Panc1 (cell line): ENCODE measurements at regions of chr19 and their contacts with region 1.

Region 1: DNA sequence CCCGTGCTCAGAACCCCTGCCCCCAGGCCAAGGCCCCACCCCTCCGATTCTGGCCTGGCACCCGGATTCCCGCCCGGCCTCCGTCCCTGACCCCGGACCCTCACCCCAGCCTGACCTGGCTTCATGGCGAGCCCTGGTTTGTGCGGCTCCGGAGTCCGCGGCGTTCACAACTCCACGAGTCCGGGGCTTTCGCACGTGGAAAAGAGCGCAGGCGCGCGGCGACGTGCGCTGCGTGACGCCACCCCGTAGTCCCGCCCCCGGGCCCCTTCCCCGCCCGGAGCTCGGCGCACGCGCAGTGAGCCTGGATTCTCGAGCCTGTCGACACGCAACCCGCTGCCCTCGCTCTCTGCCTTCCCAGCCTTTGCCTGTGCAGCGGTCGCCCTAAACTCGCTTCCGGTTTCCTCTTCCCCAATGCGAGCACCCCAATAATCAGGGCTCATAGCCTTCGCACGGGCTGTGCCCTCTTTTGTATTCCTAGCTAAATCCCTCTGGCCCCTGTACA is at the start of gene FBL:
- DNase-seq: peak; percentile 100
- ATAC-seq: peak; percentile 91
- H3K4me3 ChIP-seq: peak within 1 kb of the TSS; percentile 35 to 52
- H3K27ac ChIP-seq: peak within 1 kb of the TSS; percentile 83
- H3K4me1 ChIP-seq: peaks cover 60% of the 10 kb centered on the region
- H3K27me3 ChIP-seq: no peaks in the 10 kb centered on the region
- CTCF ChIP-seq: no peak
- total RNA-seq, gene FBL: 4,927 TPM

Region 2: GRCh38 chr19:39557441-39558151 is 288.6 kb before region 1 on chr19:
- CTCF ChIA-PET with region 1: no interaction called
- POLR2A ChIA-PET with region 1: interaction called, 3 read pairs
- in situ Hi-C with region 1: no loop called
- intact Hi-C with region 1: loop called (anchors 5 kb)
- DNase-seq: peak; percentile 91
- ATAC-seq: peak; percentile 82
- H3K4me3 ChIP-seq: peak overlapping the region; percentile 0 to 36; a peak in 3 of 4 replicates
- H3K27ac ChIP-seq: peak overlapping the region; percentile 0; the same call in 1 of the 2 replicates
- H3K4me1 ChIP-seq: peaks cover 17% of the 10 kb centered on the region
- H3K27me3 ChIP-seq: peaks cover 43% of the 10 kb centered on the region
- CTCF ChIP-seq: no peak

Region 3: DNA sequence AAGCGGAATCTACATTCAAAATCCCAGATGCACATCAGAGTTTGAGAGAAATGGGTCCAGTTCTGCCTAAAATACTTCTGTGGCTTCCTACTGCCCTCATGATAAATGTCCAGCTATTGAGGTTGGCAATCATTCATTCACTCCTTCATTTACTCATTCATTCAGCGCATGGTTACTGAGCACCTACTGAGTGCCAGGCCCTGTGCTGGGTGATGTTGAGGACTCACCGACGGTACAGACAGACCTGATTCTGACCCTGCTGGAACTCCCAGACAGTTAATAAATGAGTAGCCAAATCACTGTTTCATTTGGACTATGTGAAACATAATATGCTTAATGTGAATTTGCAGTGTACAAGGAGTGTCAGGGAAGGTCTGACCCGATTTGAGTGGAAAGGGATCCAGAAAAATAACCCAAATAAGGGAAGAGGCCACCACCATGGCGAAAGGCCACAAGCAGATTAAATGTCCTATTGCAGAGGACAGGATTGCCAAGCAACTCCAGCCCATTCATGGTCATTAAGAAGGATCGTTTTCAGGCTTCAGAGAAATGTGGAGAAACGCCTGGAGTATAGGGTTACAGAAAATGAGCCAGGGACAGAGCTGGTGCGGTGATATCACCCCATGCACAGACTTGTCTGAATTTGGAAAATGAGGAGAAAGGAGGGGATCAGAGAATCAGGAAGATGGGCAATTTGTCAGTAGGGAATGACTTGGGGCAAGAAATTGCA is 32.8 kb before region 1 on chr19:
- CTCF ChIA-PET with region 1: interaction called, 18 read pairs
- POLR2A ChIA-PET with region 1: interaction called, 9 read pairs
- in situ Hi-C with region 1: no loop called
- intact Hi-C with region 1: no loop called
- DNase-seq: no peak
- ATAC-seq: peak; percentile 5; the same call in 1 of the 2 replicates
- H3K4me3 ChIP-seq: no peak overlapping the region
- H3K27ac ChIP-seq: no peak overlapping the region
- H3K4me1 ChIP-seq: no peaks in the 10 kb centered on the region
- H3K27me3 ChIP-seq: no peaks in the 10 kb centered on the region
- CTCF ChIP-seq: no peak

Region 4: DNA sequence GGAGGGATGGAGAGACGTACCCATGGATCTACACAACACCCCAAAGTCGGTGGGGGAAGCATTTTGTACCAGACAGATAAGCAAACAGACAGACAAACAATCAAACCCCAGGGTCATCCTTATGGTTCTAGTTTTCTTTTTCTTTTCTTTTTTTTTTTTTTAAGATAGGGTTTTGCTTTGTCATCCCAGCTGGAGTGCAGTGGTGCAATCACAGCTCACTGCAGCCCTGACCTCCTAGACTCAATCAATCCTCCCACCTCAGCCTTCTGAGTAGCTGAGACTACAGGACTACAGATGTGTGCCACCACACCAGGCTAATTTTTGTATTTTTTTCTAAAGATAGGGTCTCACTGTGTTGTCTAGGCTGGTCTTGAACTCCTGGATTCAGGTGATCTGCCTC is 17.9 kb after region 1 on chr19:
- CTCF ChIA-PET with region 1: interaction called, 7 read pairs
- POLR2A ChIA-PET with region 1: interaction called, 16 read pairs
- in situ Hi-C with region 1: no loop called
- intact Hi-C with region 1: no loop called
- DNase-seq: no peak
- ATAC-seq: no peak
- H3K4me3 ChIP-seq: no peak overlapping the region
- H3K27ac ChIP-seq: no peak overlapping the region
- H3K4me1 ChIP-seq: peaks cover 4% of the 10 kb centered on the region
- H3K27me3 ChIP-seq: peaks cover 12% of the 10 kb centered on the region; the same call in 1 of the 2 replicates
- CTCF ChIP-seq: no peak

Region 5: GRCh38 chr19:39996811-39997594 is 150.8 kb after region 1 on chr19 and contains the start of gene ZNF546:
- CTCF ChIA-PET with region 1: no interaction called
- POLR2A ChIA-PET with region 1: interaction called, 10 read pairs
- in situ Hi-C with region 1: loop called (anchors 5 kb)
- intact Hi-C with region 1: no loop called
- DNase-seq: peak; percentile 100
- ATAC-seq: peak; percentile 98
- H3K4me3 ChIP-seq: peak within 1 kb of the TSS; percentile 35 to 49
- H3K27ac ChIP-seq: peak within 1 kb of the TSS; percentile 83
- H3K4me1 ChIP-seq: peaks cover 19% of the 10 kb centered on the region
- H3K27me3 ChIP-seq: no peaks in the 10 kb centered on the region
- CTCF ChIP-seq: no peak
- total RNA-seq, gene ZNF546: 68.4 TPM

Region 6: DNA sequence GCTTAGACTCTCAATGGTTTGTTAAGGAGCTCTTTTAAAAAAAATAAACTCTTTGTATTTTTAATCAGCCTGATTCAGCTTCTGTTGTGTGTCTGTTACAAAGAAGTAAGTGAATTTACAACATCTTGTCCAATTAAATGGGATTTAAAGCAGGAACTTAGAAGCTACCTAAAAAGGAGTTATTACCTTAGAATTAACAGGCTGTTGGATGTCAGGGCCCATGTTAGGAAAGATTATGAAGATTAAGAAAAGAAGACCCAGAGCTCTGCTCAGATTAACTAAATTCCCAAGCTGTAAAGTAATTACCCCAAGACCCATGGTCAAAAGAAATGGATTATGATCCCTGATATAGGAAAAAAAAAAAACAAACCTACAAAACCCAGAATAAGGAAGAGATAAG is 288.6 kb after region 1 on chr19:
- CTCF ChIA-PET with region 1: no interaction called
- POLR2A ChIA-PET with region 1: no interaction called
- in situ Hi-C with region 1: no loop called
- intact Hi-C with region 1: no loop called
- DNase-seq: no peak
- ATAC-seq: no peak
- H3K4me3 ChIP-seq: no peak overlapping the region
- H3K27ac ChIP-seq: no peak overlapping the region
- H3K4me1 ChIP-seq: no peaks in the 10 kb centered on the region
- H3K27me3 ChIP-seq: peaks cover 78% of the 10 kb centered on the region
- CTCF ChIP-seq: no peak

Region 7: DNA sequence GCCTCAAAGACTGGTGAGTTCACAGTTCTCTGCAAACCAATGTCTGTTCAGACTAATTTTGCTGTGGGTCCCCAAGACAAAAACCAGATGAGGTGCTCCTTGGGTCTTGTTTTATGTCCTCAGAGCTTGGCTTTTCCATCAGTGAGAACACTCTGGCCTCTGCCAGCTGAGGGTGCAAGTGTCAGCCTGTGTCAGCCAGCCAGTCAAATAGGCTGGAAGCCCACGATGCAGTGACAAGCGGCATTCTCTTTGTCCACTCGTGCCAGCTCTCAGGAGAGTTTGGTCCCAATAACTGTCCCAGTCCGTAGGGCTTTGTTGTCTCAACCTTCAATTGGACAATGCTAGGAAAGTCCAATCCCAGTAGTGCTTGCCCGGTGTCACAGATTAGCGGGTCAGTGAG is 448.3 kb after region 1 on chr19:
- CTCF ChIA-PET with region 1: no interaction called
- POLR2A ChIA-PET with region 1: no interaction called
- in situ Hi-C with region 1: loop called (anchors 5 kb)
- intact Hi-C with region 1: no loop called
- DNase-seq: no peak
- ATAC-seq: peak; percentile 4
- H3K4me3 ChIP-seq: no peak overlapping the region
- H3K27ac ChIP-seq: no peak overlapping the region
- H3K4me1 ChIP-seq: no peaks in the 10 kb centered on the region
- H3K27me3 ChIP-seq: peaks cover 4% of the 10 kb centered on the region; the same call in 1 of the 2 replicates
- CTCF ChIP-seq: no peak